ENCODE measurements at regions of chr15 and their contacts with region 1.

Region 1: DNA sequence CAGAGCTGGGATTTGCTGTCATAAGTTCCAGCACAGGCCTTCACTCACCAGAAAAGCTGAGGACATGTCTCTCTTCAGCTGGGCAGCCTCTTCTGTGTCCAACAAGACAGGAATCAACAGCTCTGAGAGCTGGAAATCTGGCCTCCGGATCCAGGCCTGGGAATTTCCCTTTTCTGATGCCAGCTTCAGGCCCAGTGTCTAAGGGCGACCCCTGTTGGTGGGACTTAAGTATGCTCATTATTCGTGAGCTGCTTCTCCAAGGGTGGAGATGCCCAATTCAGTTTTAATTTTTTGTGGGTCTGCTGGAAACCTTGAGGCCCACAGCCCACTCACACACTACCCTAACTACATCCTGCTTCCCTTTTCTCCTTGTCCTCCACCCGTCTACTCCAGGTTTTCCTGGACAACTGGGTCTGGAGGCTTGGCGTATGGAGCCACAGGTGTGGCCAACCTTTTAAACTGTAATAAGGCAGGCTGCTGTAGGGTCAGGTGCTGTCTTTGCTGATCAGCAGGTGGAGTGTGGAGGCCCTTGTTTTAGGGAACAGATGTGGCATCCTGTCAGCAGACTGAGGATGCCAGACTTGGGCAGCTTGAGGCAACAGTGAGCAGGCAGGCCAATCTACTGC is 2.6 kb upstream of the CEMIP start:
- DNase-seq: peak; percentile 65
- H3K4me3 Mint-ChIP-seq: no peak overlapping the region
- H3K27ac Mint-ChIP-seq: peak overlapping the region; percentile 31
- H3K4me1 Mint-ChIP-seq: peaks cover 20% of the 10 kb centered on the region
- H3K27me3 Mint-ChIP-seq: no peaks in the 10 kb centered on the region
- CTCF ChIP-seq: peak; percentile 54

Region 2: GRCh38 chr15:79160211-79160610 is 1616.3 kb before region 1 on chr15:
- CTCF ChIA-PET with region 1: no interaction called
- POLR2A ChIA-PET with region 1: no interaction called
- intact Hi-C with region 1: no loop called
- DNase-seq: peak; percentile 81
- H3K4me3 Mint-ChIP-seq: no peak overlapping the region
- H3K27ac Mint-ChIP-seq: no peak overlapping the region
- H3K4me1 Mint-ChIP-seq: peaks cover 7% of the 10 kb centered on the region
- H3K27me3 Mint-ChIP-seq: no peaks in the 10 kb centered on the region
- CTCF ChIP-seq: no peak

Region 3: GRCh38 chr15:80093854-80094418 is 682.6 kb before region 1 on chr15:
- CTCF ChIA-PET with region 1: no interaction called
- POLR2A ChIA-PET with region 1: no interaction called
- intact Hi-C with region 1: no loop called
- DNase-seq: peak; percentile 13
- H3K4me3 Mint-ChIP-seq: no peak overlapping the region
- H3K27ac Mint-ChIP-seq: peak overlapping the region; percentile 64
- H3K4me1 Mint-ChIP-seq: peaks cover 14% of the 10 kb centered on the region
- H3K27me3 Mint-ChIP-seq: no peaks in the 10 kb centered on the region
- CTCF ChIP-seq: no peak

Region 4: GRCh38 chr15:80418892-80419537 is 357.5 kb before region 1 on chr15:
- CTCF ChIA-PET with region 1: interaction called, 3 read pairs
- POLR2A ChIA-PET with region 1: no interaction called
- intact Hi-C with region 1: loop called (anchors 1 kb)
- DNase-seq: peak; percentile 64
- H3K4me3 Mint-ChIP-seq: no peak overlapping the region
- H3K27ac Mint-ChIP-seq: no peak overlapping the region
- H3K4me1 Mint-ChIP-seq: peaks cover 11% of the 10 kb centered on the region
- H3K27me3 Mint-ChIP-seq: no peaks in the 10 kb centered on the region
- CTCF ChIP-seq: peak; percentile 54

Region 5: GRCh38 chr15:80494351-80494751 is 282.2 kb before region 1 on chr15:
- CTCF ChIA-PET with region 1: no interaction called
- POLR2A ChIA-PET with region 1: no interaction called
- intact Hi-C with region 1: no loop called
- DNase-seq: no peak
- H3K4me3 Mint-ChIP-seq: no peak overlapping the region
- H3K27ac Mint-ChIP-seq: no peak overlapping the region
- H3K4me1 Mint-ChIP-seq: peaks cover 21% of the 10 kb centered on the region
- H3K27me3 Mint-ChIP-seq: no peaks in the 10 kb centered on the region
- CTCF ChIP-seq: no peak

Region 6: GRCh38 chr15:80580106-80580505 is 196.4 kb before region 1 on chr15:
- CTCF ChIA-PET with region 1: interaction called, 26 read pairs
- POLR2A ChIA-PET with region 1: interaction called, 10 read pairs
- intact Hi-C with region 1: no loop called
- DNase-seq: peak; percentile 98
- H3K4me3 Mint-ChIP-seq: peak overlapping the region; percentile 1
- H3K27ac Mint-ChIP-seq: peak overlapping the region; percentile 91
- H3K4me1 Mint-ChIP-seq: peaks cover 35% of the 10 kb centered on the region
- H3K27me3 Mint-ChIP-seq: no peaks in the 10 kb centered on the region
- CTCF ChIP-seq: no peak

Region 7: GRCh38 chr15:80660122-80660521 is 116.4 kb before region 1 on chr15:
- CTCF ChIA-PET with region 1: interaction called, 9 read pairs
- POLR2A ChIA-PET with region 1: interaction called, 3 read pairs
- intact Hi-C with region 1: loop called (anchors 1 kb)
- DNase-seq: peak; percentile 63
- H3K4me3 Mint-ChIP-seq: no peak overlapping the region
- H3K27ac Mint-ChIP-seq: no peak overlapping the region
- H3K4me1 Mint-ChIP-seq: peaks cover 17% of the 10 kb centered on the region
- H3K27me3 Mint-ChIP-seq: no peaks in the 10 kb centered on the region
- CTCF ChIP-seq: peak; percentile 48

Region 8: DNA sequence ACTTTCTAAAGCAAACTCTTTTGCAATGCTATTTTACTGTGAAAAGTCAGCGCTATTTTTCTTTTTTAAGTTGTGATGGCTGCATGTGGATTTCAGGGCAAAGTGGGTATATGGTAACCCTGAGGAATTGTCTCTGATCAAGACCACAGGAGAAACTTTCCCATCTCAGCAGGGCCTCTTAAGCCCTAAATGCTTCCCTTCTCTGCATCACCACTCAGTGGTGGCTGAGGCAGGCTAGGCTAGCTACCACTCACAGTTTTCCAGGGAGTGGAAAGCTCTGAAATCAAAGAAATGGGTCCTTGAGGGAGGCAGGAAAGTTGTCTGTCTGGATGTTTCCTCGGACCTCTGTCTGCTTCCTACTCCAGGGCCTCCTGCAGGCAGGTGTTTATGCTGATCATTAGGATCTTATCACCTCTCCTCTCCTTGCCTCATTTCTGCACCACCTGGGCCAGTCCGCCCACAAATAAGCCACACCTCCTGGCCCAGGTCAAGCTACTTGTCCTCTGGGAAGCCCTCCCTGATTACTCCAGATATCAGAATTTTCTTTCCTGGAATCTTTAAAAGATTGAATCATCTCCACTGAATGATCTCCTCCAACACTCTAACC is 39.6 kb after region 1 on chr15:
- CTCF ChIA-PET with region 1: no interaction called
- POLR2A ChIA-PET with region 1: no interaction called
- intact Hi-C with region 1: no loop called
- DNase-seq: no peak
- H3K4me3 Mint-ChIP-seq: no peak overlapping the region
- H3K27ac Mint-ChIP-seq: no peak overlapping the region
- H3K4me1 Mint-ChIP-seq: no peaks in the 10 kb centered on the region
- H3K27me3 Mint-ChIP-seq: no peaks in the 10 kb centered on the region
- CTCF ChIP-seq: no peak

Region 9: GRCh38 chr15:80849308-80849707 is 72.8 kb after region 1 on chr15:
- CTCF ChIA-PET with region 1: no interaction called
- POLR2A ChIA-PET with region 1: no interaction called
- intact Hi-C with region 1: loop called (anchors 10 kb)
- DNase-seq: peak; percentile 93
- H3K4me3 Mint-ChIP-seq: no peak overlapping the region
- H3K27ac Mint-ChIP-seq: no peak overlapping the region
- H3K4me1 Mint-ChIP-seq: peaks cover 34% of the 10 kb centered on the region
- H3K27me3 Mint-ChIP-seq: no peaks in the 10 kb centered on the region
- CTCF ChIP-seq: no peak

Region 10: GRCh38 chr15:80977627-80978036 is 201.1 kb after region 1 on chr15:
- CTCF ChIA-PET with region 1: interaction called, 133 read pairs
- POLR2A ChIA-PET with region 1: interaction called, 4 read pairs
- intact Hi-C with region 1: no loop called
- DNase-seq: peak; percentile 30
- H3K4me3 Mint-ChIP-seq: no peak overlapping the region
- H3K27ac Mint-ChIP-seq: no peak overlapping the region
- H3K4me1 Mint-ChIP-seq: peaks cover 6% of the 10 kb centered on the region
- H3K27me3 Mint-ChIP-seq: no peaks in the 10 kb centered on the region
- CTCF ChIP-seq: no peak